Activated CD4-positive, alpha-beta memory T cell treated with anti-CD3 and anti-CD28 coated beads for 36 hours (primary cell): ENCODE measurements at regions of chr10 and their contacts with region 1.

Region 1: GRCh38 chr10:101141616-101142532 is 10.8 kb downstream of the TLX1 start:
- DNase-seq: peak; percentile 88
- H3K4me3 Mint-ChIP-seq: no peak overlapping the region
- H3K27ac Mint-ChIP-seq: no peak overlapping the region
- H3K4me1 Mint-ChIP-seq: peaks cover 22% of the 10 kb centered on the region
- H3K27me3 Mint-ChIP-seq: peaks cover 85% of the 10 kb centered on the region

Region 2: DNA sequence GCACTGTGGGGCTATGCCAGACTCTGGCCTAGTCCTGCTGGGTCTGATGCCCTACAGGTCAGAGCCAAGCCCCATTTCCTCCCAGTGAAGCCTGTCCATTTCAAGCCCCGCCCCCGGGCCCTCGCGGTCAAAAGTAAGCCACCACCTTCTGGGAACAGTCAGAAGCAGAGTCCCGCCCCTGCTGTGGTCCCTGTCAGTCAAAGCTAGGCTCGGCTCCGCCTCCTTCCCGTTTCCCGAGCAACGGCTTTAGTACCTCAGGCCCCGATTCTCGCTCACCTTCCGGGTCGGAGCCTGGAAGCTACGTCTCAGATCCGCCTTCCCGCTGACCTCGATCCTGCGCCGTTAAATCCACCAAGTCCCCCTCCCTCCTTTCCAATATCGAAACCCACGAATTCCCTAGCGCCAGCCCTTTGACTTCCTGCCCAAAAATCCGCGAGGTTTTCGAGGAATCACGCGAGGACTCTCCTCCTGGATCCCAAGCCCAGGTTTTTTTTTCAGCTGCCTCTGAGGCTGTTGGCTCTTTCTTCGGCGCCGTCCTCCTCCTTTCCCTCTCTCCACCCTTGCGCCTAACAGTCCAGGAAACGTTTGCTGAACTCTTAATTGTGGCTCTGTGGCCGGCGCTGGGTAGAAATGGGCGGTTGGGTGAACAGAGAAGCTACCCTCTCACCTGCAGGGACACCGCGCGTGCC is 99.1 kb before region 1 on chr10:
- CTCF ChIA-PET with region 1: interaction called, 48 read pairs
- POLR2A ChIA-PET with region 1: interaction called, 5 read pairs
- intact Hi-C with region 1: loop called (anchors 5 kb)
- DNase-seq: peak; percentile 96
- H3K4me3 Mint-ChIP-seq: peak overlapping the region; percentile 96
- H3K27ac Mint-ChIP-seq: peak overlapping the region; percentile 89
- H3K4me1 Mint-ChIP-seq: peaks cover 21% of the 10 kb centered on the region
- H3K27me3 Mint-ChIP-seq: peaks cover 18% of the 10 kb centered on the region

Region 3: GRCh38 chr10:101060036-101060950 is 81.6 kb before region 1 on chr10:
- CTCF ChIA-PET with region 1: interaction called, 121 read pairs
- POLR2A ChIA-PET with region 1: interaction called, 3 read pairs
- intact Hi-C with region 1: no loop called
- DNase-seq: peak; percentile 92
- H3K4me3 Mint-ChIP-seq: peak overlapping the region; percentile 95
- H3K27ac Mint-ChIP-seq: peak overlapping the region; percentile 85
- H3K4me1 Mint-ChIP-seq: peaks cover 17% of the 10 kb centered on the region
- H3K27me3 Mint-ChIP-seq: peaks cover 21% of the 10 kb centered on the region

Region 4: GRCh38 chr10:101095542-101096213 is 46.2 kb before region 1 on chr10:
- CTCF ChIA-PET with region 1: interaction called, 668 read pairs
- POLR2A ChIA-PET with region 1: interaction called, 12 read pairs
- intact Hi-C with region 1: loop called (anchors 1 kb)
- DNase-seq: peak; percentile 85
- H3K4me3 Mint-ChIP-seq: no peak overlapping the region
- H3K27ac Mint-ChIP-seq: no peak overlapping the region
- H3K4me1 Mint-ChIP-seq: no peaks in the 10 kb centered on the region
- H3K27me3 Mint-ChIP-seq: peaks cover 33% of the 10 kb centered on the region

Region 5: DNA sequence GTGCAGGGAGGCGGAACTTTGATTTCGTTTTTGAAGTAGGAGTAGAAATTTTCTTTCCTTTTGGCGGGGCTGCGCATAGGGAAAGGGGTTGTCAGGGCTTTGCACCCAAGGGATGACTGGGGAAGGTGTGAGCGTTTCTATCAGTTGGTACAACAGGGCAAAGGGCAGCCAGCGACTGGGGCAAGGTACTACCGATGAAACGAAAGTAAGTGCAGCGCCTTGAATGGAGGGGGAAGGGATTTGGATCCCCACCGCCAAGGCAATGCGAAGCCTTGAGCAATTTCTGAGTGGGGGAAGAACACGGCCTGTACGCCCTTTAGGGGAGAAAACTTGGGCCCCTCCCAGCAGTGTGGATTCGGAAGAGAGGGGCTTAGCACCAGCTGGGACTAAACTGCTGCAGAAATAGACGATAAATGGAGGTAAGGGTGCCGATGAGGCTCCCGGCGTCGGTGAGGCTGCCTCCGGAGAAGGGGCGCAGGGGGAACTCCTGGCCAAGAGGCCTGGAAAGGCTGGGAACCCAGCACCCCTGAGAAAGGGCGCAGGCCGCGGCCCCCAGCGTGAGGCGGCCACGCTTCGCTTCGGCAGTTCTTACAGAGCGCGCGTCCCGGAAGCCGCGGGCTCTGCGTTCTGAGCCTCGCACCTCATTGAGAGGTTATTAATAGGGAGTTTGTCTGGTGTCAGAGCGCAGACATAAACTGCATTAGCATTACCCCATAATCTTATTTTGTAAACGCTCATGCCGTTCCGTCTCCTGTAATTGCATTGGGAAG is 20.8 kb before region 1 on chr10:
- CTCF ChIA-PET with region 1: interaction called, 65 read pairs
- POLR2A ChIA-PET with region 1: no interaction called
- intact Hi-C with region 1: loop called (anchors 2 kb)
- DNase-seq: peak; percentile 55
- H3K4me3 Mint-ChIP-seq: peak overlapping the region; percentile 84
- H3K27ac Mint-ChIP-seq: no peak overlapping the region
- H3K4me1 Mint-ChIP-seq: peaks cover 31% of the 10 kb centered on the region
- H3K27me3 Mint-ChIP-seq: peaks cover 51% of the 10 kb centered on the region

Region 6: DNA sequence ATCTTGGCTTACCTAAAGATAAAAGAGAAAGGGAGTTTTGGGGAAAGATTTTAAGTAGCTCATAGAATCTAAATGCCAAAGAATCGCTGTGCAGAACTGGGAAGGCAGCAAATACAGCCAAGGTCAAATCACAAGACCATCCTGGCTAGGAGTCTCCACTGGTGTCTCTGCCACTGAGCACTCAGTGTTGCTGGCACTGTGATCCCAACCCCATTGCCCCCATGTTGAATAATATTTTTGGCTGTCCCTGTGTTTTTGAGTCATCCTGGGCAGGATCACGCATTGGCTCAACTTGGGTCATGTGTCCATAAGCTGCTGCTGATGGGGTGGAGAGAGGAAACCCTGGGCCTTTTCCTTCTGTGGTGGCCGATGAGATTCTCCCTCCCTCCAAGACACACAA is 10.4 kb after region 1 on chr10:
- CTCF ChIA-PET with region 1: interaction called, 29 read pairs
- POLR2A ChIA-PET with region 1: no interaction called
- intact Hi-C with region 1: no loop called
- DNase-seq: no peak
- H3K4me3 Mint-ChIP-seq: no peak overlapping the region
- H3K27ac Mint-ChIP-seq: no peak overlapping the region
- H3K4me1 Mint-ChIP-seq: no peaks in the 10 kb centered on the region
- H3K27me3 Mint-ChIP-seq: peaks cover 45% of the 10 kb centered on the region

Region 7: GRCh38 chr10:101222683-101223273 is 80.9 kb after region 1 on chr10:
- CTCF ChIA-PET with region 1: interaction called, 10 read pairs
- POLR2A ChIA-PET with region 1: no interaction called
- intact Hi-C with region 1: loop called (anchors 5 kb)
- DNase-seq: peak; percentile 25
- H3K4me3 Mint-ChIP-seq: peak overlapping the region; percentile 31
- H3K27ac Mint-ChIP-seq: no peak overlapping the region
- H3K4me1 Mint-ChIP-seq: peaks cover 46% of the 10 kb centered on the region
- H3K27me3 Mint-ChIP-seq: peaks cover 84% of the 10 kb centered on the region

Region 8: GRCh38 chr10:101266381-101267289 is 124.8 kb after region 1 on chr10:
- CTCF ChIA-PET with region 1: no interaction called
- POLR2A ChIA-PET with region 1: no interaction called
- intact Hi-C with region 1: no loop called
- DNase-seq: no peak
- H3K4me3 Mint-ChIP-seq: no peak overlapping the region
- H3K27ac Mint-ChIP-seq: no peak overlapping the region
- H3K4me1 Mint-ChIP-seq: no peaks in the 10 kb centered on the region
- H3K27me3 Mint-ChIP-seq: peaks cover 16% of the 10 kb centered on the region

Region 9: DNA sequence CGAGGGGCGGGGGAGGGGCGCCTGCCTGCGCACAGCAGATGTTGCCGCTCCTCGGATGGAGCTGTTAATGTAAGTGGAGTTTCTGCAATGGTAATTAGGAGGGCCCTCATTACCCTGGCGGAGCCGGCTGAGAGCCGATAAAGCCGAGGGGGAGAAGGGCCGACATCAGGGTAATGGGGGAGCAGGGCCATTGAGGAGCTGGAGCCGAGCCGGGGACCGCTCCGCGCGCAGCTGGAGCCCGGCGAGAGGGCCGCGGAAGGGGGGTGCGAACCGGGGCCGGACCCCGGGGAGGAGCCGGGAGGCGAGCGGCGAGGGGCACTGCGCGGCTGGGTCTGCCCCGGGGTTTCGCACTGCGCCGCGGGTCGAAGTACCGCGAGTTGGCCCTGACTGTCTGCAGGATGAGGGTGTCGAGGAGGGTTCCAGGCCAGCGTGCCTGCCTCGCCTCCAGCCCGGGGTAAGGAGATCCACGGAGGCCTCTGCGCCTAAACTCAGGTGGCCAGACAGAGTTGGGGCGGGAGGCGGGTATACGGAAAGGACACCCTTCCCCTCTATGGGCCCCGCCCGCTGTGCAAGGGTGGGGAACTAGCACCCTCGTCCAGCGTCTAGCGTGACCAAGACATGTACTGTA is 142.4 kb after region 1 on chr10:
- CTCF ChIA-PET with region 1: no interaction called
- POLR2A ChIA-PET with region 1: no interaction called
- intact Hi-C with region 1: no loop called
- DNase-seq: no peak
- H3K4me3 Mint-ChIP-seq: no peak overlapping the region
- H3K27ac Mint-ChIP-seq: no peak overlapping the region
- H3K4me1 Mint-ChIP-seq: peaks cover 5% of the 10 kb centered on the region
- H3K27me3 Mint-ChIP-seq: peaks cover 56% of the 10 kb centered on the region

Region 10: GRCh38 chr10:101301249-101301711 is 159.4 kb after region 1 on chr10:
- CTCF ChIA-PET with region 1: no interaction called
- POLR2A ChIA-PET with region 1: no interaction called
- intact Hi-C with region 1: no loop called
- DNase-seq: peak; percentile 71
- H3K4me3 Mint-ChIP-seq: no peak overlapping the region
- H3K27ac Mint-ChIP-seq: no peak overlapping the region
- H3K4me1 Mint-ChIP-seq: no peaks in the 10 kb centered on the region
- H3K27me3 Mint-ChIP-seq: peaks cover 23% of the 10 kb centered on the region